HCT116 (cell line): ENCODE measurements at regions of chr12 and their contacts with region 1.

Region 1: DNA sequence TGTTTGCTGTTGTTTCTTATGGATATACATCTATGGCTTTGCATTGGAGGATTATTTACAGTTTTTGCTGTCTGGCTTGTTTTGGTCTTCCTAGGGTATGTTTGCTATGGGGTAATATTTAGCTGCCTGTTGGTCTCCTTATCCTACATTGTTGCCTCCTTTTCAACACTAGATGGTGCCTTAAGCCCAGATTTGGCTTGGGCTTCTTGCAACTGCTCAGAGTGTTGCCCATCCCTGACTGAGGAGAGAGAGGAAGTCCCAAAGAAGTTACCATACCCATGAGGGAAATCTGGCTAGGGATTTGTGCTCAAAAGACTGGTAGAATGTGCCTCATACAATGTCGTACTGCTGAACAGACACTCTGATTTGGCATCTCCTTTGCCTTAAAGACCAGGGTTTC is 94.6 kb upstream of the MUCL1 start:
- DNase-seq: peak; percentile 42
- ATAC-seq: peak; percentile 93
- H3K4me3 ChIP-seq: no peak overlapping the region
- H3K27ac ChIP-seq: no peak overlapping the region
- H3K4me1 ChIP-seq: no peaks in the 10 kb centered on the region
- H3K27me3 ChIP-seq: peaks cover 36% of the 10 kb centered on the region
- CTCF ChIP-seq: peak; percentile 53 to 72 (median 64); a peak in 5 of 6 replicates
- POLR2A ChIP-seq: no peak
- RAD21 ChIP-seq: peak; percentile 87

Region 2: GRCh38 chr12:54723379-54724256 is 36.1 kb before region 1 on chr12:
- CTCF ChIA-PET with region 1: interaction called, 11 read pairs
- POLR2A ChIA-PET with region 1: no interaction called
- RAD21 ChIA-PET with region 1: no interaction called
- intact Hi-C with region 1: no loop called
- DNase-seq: peak; percentile 13
- ATAC-seq: peak; percentile 74
- H3K4me3 ChIP-seq: no peak overlapping the region
- H3K27ac ChIP-seq: no peak overlapping the region
- H3K4me1 ChIP-seq: no peaks in the 10 kb centered on the region
- H3K27me3 ChIP-seq: peaks cover 43% of the 10 kb centered on the region
- CTCF ChIP-seq: peak; percentile 7 to 66 (median 62); a peak in 4 of 6 replicates
- POLR2A ChIP-seq: no peak
- RAD21 ChIP-seq: no peak

Region 3: DNA sequence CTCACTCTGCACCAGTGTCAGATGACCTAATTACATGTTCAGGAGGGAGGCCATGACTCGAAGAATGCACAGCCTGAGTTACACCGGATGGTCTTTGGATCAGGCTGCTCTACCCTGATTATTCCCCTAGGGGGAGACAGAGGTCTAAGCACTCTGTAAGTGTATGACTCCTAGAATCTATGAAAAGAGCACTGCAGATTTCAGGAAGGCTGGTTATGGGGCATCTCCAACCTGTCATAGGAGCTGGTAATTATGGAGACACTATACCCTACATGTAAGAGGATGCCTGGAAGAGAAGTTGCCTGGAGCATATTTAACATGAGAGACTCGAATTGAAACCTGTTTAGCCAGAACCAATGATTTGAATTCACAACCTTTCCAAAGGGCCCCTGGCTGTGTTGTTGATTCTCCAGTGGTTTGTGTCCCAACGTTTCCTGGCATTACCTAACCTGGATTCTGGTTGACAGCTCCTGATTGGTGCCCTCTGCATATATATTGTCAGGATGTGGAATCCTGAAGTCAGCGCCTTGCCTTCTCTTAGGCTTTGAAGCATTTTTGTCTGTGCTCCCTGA is 94.3 kb after region 1 on chr12 and contains the start of gene MUCL1:
- CTCF ChIA-PET with region 1: interaction called, 4 read pairs
- POLR2A ChIA-PET with region 1: no interaction called
- RAD21 ChIA-PET with region 1: no interaction called
- intact Hi-C with region 1: loop called (anchors 1 kb)
- DNase-seq: peak; percentile 62
- ATAC-seq: peak; percentile 100
- H3K4me3 ChIP-seq: no peak within 1 kb of the TSS
- H3K27ac ChIP-seq: no peak within 1 kb of the TSS
- H3K4me1 ChIP-seq: no peaks in the 10 kb centered on the region
- H3K27me3 ChIP-seq: peaks cover 30% of the 10 kb centered on the region
- CTCF ChIP-seq: peak; percentile 77 to 92 (median 84); a peak in 5 of 6 replicates
- POLR2A ChIP-seq: no peak
- RAD21 ChIP-seq: peak; percentile 87
- total RNA-seq, gene MUCL1: not detected

Region 4: DNA sequence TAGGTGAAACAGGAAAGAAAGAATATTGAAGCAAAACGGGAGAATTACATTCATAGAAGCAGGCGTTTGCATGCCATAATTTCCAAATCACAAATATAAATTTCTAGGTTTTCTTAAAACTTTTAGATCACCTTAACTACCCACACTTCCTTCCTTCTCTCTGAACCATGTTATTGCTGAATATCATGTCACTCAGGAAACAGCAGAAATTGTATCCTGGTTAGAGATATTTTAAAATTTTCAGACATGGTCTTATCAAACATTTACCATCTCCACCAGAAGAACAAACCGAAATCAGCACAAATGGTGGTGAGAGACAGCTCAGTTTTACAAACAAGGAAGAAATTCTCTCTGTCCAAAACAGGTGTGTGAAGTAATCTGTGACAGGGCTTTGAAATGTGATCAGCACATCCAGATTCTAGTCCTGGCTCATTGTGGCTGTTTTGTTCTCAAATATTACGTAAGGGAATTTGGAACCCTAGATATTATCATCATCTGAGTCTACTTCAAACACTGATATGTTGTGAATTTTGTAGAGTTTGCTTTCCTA is 208.5 kb after region 1 on chr12:
- CTCF ChIA-PET with region 1: interaction called, 19 read pairs
- POLR2A ChIA-PET with region 1: no interaction called
- RAD21 ChIA-PET with region 1: no interaction called
- intact Hi-C with region 1: no loop called
- DNase-seq: no peak
- ATAC-seq: no peak
- H3K4me3 ChIP-seq: no peak overlapping the region
- H3K27ac ChIP-seq: no peak overlapping the region
- H3K4me1 ChIP-seq: no peaks in the 10 kb centered on the region
- H3K27me3 ChIP-seq: peaks cover 82% of the 10 kb centered on the region
- CTCF ChIP-seq: no peak
- POLR2A ChIP-seq: no peak
- RAD21 ChIP-seq: no peak

Region 5: DNA sequence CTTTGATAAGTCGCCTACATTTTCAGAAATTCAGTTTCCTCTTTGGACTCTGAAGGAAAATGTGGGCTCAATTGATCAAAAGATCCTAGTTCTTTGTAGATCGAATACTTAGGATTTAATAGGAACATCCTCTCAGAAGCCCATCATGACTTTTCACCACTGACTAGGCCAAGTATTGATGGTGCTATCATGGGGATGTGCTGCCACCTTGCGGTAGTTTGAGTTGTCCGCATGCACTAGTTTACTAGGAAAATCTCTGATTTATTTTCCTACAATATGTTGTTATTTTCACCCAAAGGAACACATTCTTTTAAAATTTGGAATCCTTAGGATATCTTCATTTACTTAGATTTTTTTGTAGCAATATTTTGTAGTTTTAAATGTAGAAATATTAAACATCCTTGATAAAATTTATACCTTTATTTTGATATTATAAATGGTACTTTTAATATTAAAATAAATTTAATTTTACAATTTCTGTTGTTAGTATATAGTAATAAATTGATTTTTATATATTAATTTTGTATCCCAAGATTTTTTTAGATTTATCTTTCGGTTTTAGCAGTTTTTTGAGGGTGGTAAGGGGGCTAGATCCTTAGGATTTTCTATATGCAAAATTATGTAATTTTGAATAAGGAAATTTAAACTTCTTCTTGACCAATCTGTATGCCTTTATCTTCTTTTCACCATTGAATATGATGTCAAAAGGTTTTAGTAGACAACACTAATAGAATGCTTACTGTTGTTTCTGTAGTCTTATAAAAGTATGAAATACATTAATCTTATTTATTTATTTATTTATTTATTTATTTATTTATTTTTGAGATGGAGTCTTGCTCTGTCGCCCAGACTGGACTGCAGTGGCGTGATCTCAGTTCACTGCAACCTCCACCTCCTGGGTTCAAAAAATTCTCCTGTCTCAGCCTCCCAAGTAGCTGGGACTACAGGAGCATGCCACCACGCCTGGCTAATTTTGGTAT is 313.6 kb after region 1 on chr12:
- CTCF ChIA-PET with region 1: interaction called, 31 read pairs
- POLR2A ChIA-PET with region 1: no interaction called
- RAD21 ChIA-PET with region 1: no interaction called
- intact Hi-C with region 1: loop called (anchors 5 kb)
- DNase-seq: peak; percentile 66
- ATAC-seq: 0 out of 2 replicates have a peak, but pooled peaks have one; percentile 35
- H3K4me3 ChIP-seq: no peak overlapping the region
- H3K27ac ChIP-seq: no peak overlapping the region
- H3K4me1 ChIP-seq: no peaks in the 10 kb centered on the region
- H3K27me3 ChIP-seq: peaks cover 17% of the 10 kb centered on the region
- CTCF ChIP-seq: peak; percentile 71 to 87 (median 79)
- POLR2A ChIP-seq: no peak
- RAD21 ChIP-seq: peak; percentile 84

Region 6: GRCh38 chr12:55392032-55392795 is 632.5 kb after region 1 on chr12:
- CTCF ChIA-PET with region 1: no interaction called
- POLR2A ChIA-PET with region 1: no interaction called
- RAD21 ChIA-PET with region 1: no interaction called
- intact Hi-C with region 1: no loop called
- DNase-seq: no peak
- ATAC-seq: no peak
- H3K4me3 ChIP-seq: no peak overlapping the region
- H3K27ac ChIP-seq: no peak overlapping the region
- H3K4me1 ChIP-seq: no peaks in the 10 kb centered on the region
- H3K27me3 ChIP-seq: peaks cover 22% of the 10 kb centered on the region
- CTCF ChIP-seq: no peak
- POLR2A ChIP-seq: no peak
- RAD21 ChIP-seq: no peak